AG04450 (cell line): ENCODE measurements at regions of chr1 and their contacts with region 1.

Region 1: GRCh38 chr1:160376525-160377131 is 9.8 kb downstream of the NHLH1 start:
- DNase-seq: peak; percentile 37
- H3K4me3 ChIP-seq: no peak overlapping the region
- H3K27ac ChIP-seq: no peak overlapping the region
- H3K27me3 ChIP-seq: peaks cover 2% of the 10 kb centered on the region
- CTCF ChIP-seq: peak; percentile 99

Region 2: GRCh38 chr1:160244209-160244608 is 132.4 kb before region 1 on chr1:
- CTCF ChIA-PET with region 1: no interaction called
- POLR2A ChIA-PET with region 1: no interaction called
- DNase-seq: no peak
- H3K4me3 ChIP-seq: no peak overlapping the region
- H3K27ac ChIP-seq: no peak overlapping the region
- H3K27me3 ChIP-seq: no peaks in the 10 kb centered on the region
- CTCF ChIP-seq: no peak

Region 3: DNA sequence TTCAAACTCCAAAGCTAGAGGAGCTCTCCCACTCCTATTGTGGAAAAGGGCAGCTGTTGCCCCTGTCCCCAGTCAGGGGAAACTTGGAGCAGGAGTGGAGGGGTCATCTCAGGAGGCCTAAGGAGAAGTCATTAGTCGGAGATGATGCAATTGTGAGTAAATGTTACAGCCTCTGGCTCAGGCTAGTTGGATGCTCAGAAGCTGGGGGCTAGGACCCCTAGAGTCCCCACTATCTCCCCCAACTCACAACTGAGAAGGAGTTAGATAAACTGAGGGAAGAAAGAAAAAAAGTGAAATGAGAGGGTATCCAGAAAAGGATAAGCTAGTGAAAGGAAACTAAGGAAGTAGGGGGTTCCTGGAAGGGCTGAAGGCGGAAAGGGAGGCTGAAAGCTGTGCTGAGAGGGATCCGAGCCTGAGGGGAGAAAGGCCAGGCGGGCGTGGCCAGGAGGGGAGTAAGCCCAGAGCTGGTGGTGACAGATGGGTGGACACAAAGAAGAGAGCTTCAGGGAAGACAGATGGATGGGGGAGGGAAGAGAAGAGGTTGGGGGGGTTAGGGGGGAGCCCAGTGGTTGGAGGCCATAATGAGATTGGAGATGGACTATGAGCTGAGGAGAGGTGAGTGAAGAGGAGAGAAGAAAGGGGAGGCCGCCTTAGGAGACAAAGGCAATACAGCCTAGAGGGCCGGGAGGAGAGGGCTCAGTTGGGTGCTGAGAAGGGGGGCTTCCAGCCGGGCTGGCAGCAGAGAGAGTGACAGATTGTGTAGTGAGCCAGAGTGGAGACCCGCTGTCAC is 14.3 kb before region 1 on chr1:
- CTCF ChIA-PET with region 1: interaction called, 21 read pairs
- POLR2A ChIA-PET with region 1: no interaction called
- DNase-seq: no peak
- H3K4me3 ChIP-seq: no peak overlapping the region
- H3K27ac ChIP-seq: no peak overlapping the region
- H3K27me3 ChIP-seq: peaks cover 5% of the 10 kb centered on the region
- CTCF ChIP-seq: no peak